Activated CD8-positive, alpha-beta T cell treated with anti-CD3 and anti-CD28 coated beads, Interleukin-2, amount 10 ng/mL, durations not matched to agents 7 days and 5 days (primary cell): ENCODE measurements at regions of chr20 and their contacts with region 1.

Region 1: GRCh38 chr20:13261460-13262301 is 40.6 kb downstream of the ISM1 start:
- DNase-seq: peak; percentile 79
- ATAC-seq: peak; percentile 99
- H3K4me3 Mint-ChIP-seq: no peak overlapping the region
- H3K27ac Mint-ChIP-seq: no peak overlapping the region
- H3K4me1 Mint-ChIP-seq: peaks cover 11% of the 10 kb centered on the region
- H3K27me3 Mint-ChIP-seq: no peaks in the 10 kb centered on the region

Region 2: GRCh38 chr20:13119583-13119982 is 142.1 kb before region 1 on chr20:
- CTCF ChIA-PET with region 1: interaction called, 19 read pairs
- POLR2A ChIA-PET with region 1: no interaction called
- DNase-seq: peak; percentile 58
- ATAC-seq: peak; percentile 86
- H3K4me3 Mint-ChIP-seq: no peak overlapping the region
- H3K27ac Mint-ChIP-seq: no peak overlapping the region
- H3K4me1 Mint-ChIP-seq: no peaks in the 10 kb centered on the region
- H3K27me3 Mint-ChIP-seq: no peaks in the 10 kb centered on the region

Region 3: DNA sequence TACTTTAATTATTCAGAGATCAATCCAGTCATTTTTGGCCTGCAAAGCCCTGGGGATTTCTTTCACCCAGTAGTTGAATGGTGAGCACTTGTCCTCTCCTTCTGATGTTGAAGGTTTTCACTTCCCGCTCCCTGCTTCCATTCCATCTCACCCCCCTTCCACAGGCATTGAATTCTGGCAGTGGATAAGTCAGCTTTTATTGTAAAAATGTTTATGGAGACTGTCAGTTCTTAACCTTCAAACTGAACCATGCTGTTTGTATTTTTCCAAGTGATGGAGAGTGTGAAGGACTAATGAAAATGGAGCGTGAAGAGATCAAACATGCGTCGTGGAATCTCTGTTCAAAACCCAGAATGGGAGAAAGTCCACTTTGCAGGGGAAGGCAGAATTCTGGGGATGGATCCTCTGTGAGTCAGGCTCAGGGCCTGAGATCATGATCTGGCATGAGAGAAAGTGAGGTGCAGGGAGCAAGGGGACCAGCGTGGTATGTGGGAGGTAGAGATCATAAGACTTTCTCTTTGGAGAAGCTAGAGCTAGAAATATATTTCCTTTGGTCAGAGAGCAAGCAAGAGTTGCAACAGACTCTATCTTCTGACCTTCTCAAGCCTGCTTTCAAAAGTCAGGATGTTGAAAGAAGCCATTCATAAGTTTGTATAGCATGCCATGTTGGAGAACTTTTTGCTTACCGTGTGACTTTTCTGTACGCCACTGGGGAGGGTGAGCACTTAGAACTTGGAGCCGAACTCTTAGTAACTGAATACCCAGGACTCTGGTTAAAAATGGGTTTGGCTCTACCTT is 10.4 kb before region 1 on chr20:
- CTCF ChIA-PET with region 1: interaction called, 19 read pairs
- POLR2A ChIA-PET with region 1: no interaction called
- DNase-seq: no peak
- ATAC-seq: no peak
- H3K4me3 Mint-ChIP-seq: no peak overlapping the region
- H3K27ac Mint-ChIP-seq: no peak overlapping the region
- H3K4me1 Mint-ChIP-seq: peaks cover 36% of the 10 kb centered on the region
- H3K27me3 Mint-ChIP-seq: no peaks in the 10 kb centered on the region

Region 4: GRCh38 chr20:13271977-13272975 is 10.6 kb after region 1 on chr20:
- CTCF ChIA-PET with region 1: interaction called, 13 read pairs
- POLR2A ChIA-PET with region 1: no interaction called
- DNase-seq: no peak
- ATAC-seq: no peak
- H3K4me3 Mint-ChIP-seq: no peak overlapping the region
- H3K27ac Mint-ChIP-seq: no peak overlapping the region
- H3K4me1 Mint-ChIP-seq: no peaks in the 10 kb centered on the region
- H3K27me3 Mint-ChIP-seq: peaks cover 5% of the 10 kb centered on the region